ENCODE measurements at regions of chr3 and their contacts with region 1.

Region 1: GRCh38 chr3:137105277-137105977 is 147.6 kb downstream of the IL20RB start:
- DNase-seq: peak; percentile 77
- H3K4me3 ChIP-seq: no peak overlapping the region
- H3K27ac ChIP-seq: no peak overlapping the region
- H3K4me1 ChIP-seq: no peaks in the 10 kb centered on the region
- H3K27me3 ChIP-seq: peaks cover 45% of the 10 kb centered on the region
- CTCF ChIP-seq: peak; percentile 86

Region 2: GRCh38 chr3:137524751-137525150 is 419.3 kb after region 1 on chr3:
- CTCF ChIA-PET with region 1: no interaction called
- POLR2A ChIA-PET with region 1: no interaction called
- intact Hi-C with region 1: no loop called
- DNase-seq: no peak
- H3K4me3 ChIP-seq: no peak overlapping the region
- H3K27ac ChIP-seq: no peak overlapping the region
- H3K4me1 ChIP-seq: no peaks in the 10 kb centered on the region
- H3K27me3 ChIP-seq: peaks cover 7% of the 10 kb centered on the region
- CTCF ChIP-seq: no peak

Region 3: DNA sequence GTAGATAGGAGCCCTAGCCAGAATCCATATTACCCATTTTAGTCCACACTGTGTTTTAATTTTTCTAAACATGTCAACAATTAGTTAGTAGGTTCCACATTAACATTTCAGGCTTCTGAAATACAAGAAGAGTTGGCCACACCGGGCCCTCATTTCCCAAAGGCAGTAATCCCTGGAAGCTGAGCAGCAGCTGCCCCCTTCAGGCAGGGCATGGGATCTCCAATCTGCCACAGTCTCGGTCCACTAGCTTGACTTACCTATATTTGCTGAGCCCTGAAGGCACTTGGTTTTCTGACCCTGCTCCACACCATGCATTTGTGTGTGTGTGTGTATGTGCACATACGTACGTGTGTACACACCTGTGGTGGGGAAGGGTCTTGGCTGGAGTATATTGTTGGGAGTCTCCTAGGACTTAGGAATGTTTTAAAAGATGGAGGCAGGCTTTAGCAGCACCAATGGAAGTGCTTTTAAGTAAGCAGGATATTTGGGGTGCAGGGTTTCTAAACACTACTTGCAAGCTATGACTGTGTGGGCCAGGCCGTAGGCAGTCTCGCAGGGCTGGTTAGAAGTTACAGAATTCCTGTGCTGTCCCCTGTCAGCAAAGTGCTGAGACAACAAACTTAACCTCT is 587.5 kb after region 1 on chr3:
- CTCF ChIA-PET with region 1: no interaction called
- POLR2A ChIA-PET with region 1: no interaction called
- intact Hi-C with region 1: loop called (anchors 5 kb)
- DNase-seq: peak; percentile 54
- H3K4me3 ChIP-seq: no peak overlapping the region
- H3K27ac ChIP-seq: no peak overlapping the region
- H3K4me1 ChIP-seq: no peaks in the 10 kb centered on the region
- H3K27me3 ChIP-seq: peaks cover 10% of the 10 kb centered on the region
- CTCF ChIP-seq: peak; percentile 74

Region 4: GRCh38 chr3:137764001-137764433 is 658.6 kb after region 1 on chr3 and contains the start of gene SOX14:
- CTCF ChIA-PET with region 1: no interaction called
- POLR2A ChIA-PET with region 1: no interaction called
- intact Hi-C with region 1: loop called (anchors 10 kb)
- DNase-seq: no peak
- H3K4me3 ChIP-seq: no peak within 1 kb of the TSS
- H3K27ac ChIP-seq: no peak within 1 kb of the TSS
- H3K4me1 ChIP-seq: no peaks in the 10 kb centered on the region
- H3K27me3 ChIP-seq: peaks cover 96% of the 10 kb centered on the region
- CTCF ChIP-seq: no peak
- total RNA-seq, gene SOX14: not detected in 2 replicates

Region 5: GRCh38 chr3:137792626-137793271 is 687.3 kb after region 1 on chr3:
- CTCF ChIA-PET with region 1: no interaction called
- POLR2A ChIA-PET with region 1: no interaction called
- intact Hi-C with region 1: loop called (anchors 10 kb)
- DNase-seq: peak; percentile 51
- H3K4me3 ChIP-seq: no peak overlapping the region
- H3K27ac ChIP-seq: no peak overlapping the region
- H3K4me1 ChIP-seq: no peaks in the 10 kb centered on the region
- H3K27me3 ChIP-seq: peaks cover 61% of the 10 kb centered on the region
- CTCF ChIP-seq: peak; percentile 57

Region 6: DNA sequence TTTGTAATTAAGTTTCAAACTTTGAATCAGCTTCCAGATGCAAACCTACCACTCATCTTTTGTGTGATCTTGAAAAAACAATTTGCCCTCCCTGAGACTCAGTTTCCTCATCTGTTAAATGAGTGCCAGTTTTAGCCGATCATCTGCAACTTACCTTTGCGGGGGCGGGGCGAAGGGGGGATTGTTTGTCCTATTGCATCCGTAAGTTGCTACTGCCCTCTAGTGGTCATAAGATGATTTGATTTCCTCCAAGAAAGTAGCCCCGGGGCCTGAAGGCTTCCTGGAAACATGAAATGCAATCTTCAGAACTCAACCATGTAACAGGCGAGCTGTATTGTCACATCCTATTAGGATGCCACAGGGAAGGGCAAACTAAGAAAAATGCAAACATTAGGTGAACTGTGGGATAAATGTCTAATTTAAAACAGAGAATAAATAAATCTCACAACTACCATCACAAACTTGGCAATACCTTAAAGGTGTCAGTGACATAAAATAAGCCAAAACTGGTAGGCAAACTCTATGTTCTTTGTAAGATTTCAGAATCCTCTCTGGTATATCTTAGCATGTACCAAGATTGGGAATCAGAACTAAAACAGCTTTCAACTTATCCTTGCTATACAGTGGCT is 841.0 kb after region 1 on chr3:
- CTCF ChIA-PET with region 1: interaction called, 3 read pairs
- POLR2A ChIA-PET with region 1: no interaction called
- intact Hi-C with region 1: loop called (anchors 5 kb)
- DNase-seq: peak; percentile 80
- H3K4me3 ChIP-seq: no peak overlapping the region
- H3K27ac ChIP-seq: no peak overlapping the region
- H3K4me1 ChIP-seq: no peaks in the 10 kb centered on the region
- H3K27me3 ChIP-seq: no peaks in the 10 kb centered on the region
- CTCF ChIP-seq: peak; percentile 85

Region 7: GRCh38 chr3:137970914-137971831 is 865.7 kb after region 1 on chr3:
- CTCF ChIA-PET with region 1: no interaction called
- POLR2A ChIA-PET with region 1: no interaction called
- intact Hi-C with region 1: loop called (anchors 1 kb)
- DNase-seq: peak; percentile 75
- H3K4me3 ChIP-seq: no peak overlapping the region
- H3K27ac ChIP-seq: no peak overlapping the region
- H3K4me1 ChIP-seq: no peaks in the 10 kb centered on the region
- H3K27me3 ChIP-seq: no peaks in the 10 kb centered on the region
- CTCF ChIP-seq: peak; percentile 90

Region 8: DNA sequence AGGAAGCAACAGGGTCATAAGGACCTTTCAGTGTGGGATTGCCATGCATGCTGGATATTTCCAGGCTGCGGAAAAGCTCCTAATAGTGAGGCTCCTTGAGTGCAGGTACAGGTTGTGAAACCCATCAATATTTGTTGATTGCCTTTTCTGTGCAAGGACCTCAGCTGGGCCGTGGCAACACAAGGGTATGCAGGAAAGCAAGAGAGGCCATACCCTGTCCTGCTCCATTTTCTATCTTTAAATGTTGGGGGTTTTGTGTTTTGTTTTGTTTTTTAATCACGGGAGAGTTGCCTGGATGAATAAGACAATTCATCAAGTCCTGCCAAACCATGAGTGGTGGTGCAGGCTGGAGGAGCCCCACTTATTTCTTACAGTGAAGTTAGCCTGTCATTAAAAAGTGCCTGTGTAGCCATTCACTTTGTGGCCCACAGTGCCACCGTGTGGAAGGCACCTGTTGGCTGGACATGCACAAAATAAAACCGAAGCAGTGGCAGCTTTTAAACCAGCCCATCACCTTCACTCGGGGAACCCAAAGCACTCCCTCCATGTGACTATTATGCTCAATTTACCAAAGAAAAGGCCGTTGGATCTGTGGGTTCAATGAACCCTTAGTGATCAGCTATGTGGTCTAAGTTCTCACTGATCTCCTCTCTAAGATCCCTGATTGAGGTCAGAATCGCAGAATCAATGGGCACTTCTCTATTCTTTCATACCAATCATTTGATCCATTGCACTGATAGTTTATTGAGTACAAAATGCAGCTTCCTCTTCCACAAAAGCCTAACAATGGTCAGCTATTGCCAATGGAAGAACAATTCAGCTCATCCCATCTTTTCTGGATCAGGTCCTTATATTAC is 946.7 kb after region 1 on chr3:
- CTCF ChIA-PET with region 1: no interaction called
- POLR2A ChIA-PET with region 1: no interaction called
- intact Hi-C with region 1: loop called (anchors 10 kb)
- DNase-seq: peak; percentile 53
- H3K4me3 ChIP-seq: no peak overlapping the region
- H3K27ac ChIP-seq: no peak overlapping the region
- H3K4me1 ChIP-seq: no peaks in the 10 kb centered on the region
- H3K27me3 ChIP-seq: no peaks in the 10 kb centered on the region
- CTCF ChIP-seq: peak; percentile 74

Measured in A673 (cell line).